CD4-positive, alpha-beta memory T cell (primary cell): ENCODE measurements at regions of chr1 and their contacts with region 1.

Region 1: GRCh38 chr1:84077476-84078107 is 66.5 kb upstream of the PRKACB start:
- DNase-seq: peak; percentile 61 to 77 (median 70)
- H3K4me3 ChIP-seq: peak overlapping the region; percentile 60 to 70
- H3K4me3 Mint-ChIP-seq: peak overlapping the region; percentile 82 to 93 (median 90)
- H3K27ac ChIP-seq: peak overlapping the region; percentile 43
- H3K27ac Mint-ChIP-seq: peak overlapping the region in 6 of 7 donors; percentile 19 to 85 (median 76)
- H3K4me1 ChIP-seq: peaks cover 17% of the 10 kb centered on the region
- H3K4me1 Mint-ChIP-seq: peaks cover 7 to 16% (median 11%) of the 10 kb centered on the region in 4 donors
- H3K27me3 ChIP-seq: no peaks in the 10 kb centered on the region
- H3K27me3 Mint-ChIP-seq: peaks cover 0 to 8% of the 10 kb centered on the region in 2 donors

Region 2: GRCh38 chr1:84090447-84091245 is 13.1 kb after region 1 on chr1:
- CTCF ChIA-PET with region 1: interaction called, 5 read pairs
- POLR2A ChIA-PET with region 1: interaction called, 11 read pairs
- intact Hi-C with region 1: loop called (anchors 2 kb)
- DNase-seq: peak; percentile 16 to 39 (median 38)
- H3K4me3 ChIP-seq: peak overlapping the region; percentile 12 to 42
- H3K4me3 Mint-ChIP-seq: peak overlapping the region; percentile 58 to 89 (median 76)
- H3K27ac ChIP-seq: no peak overlapping the region
- H3K27ac Mint-ChIP-seq: peak overlapping the region; percentile 59 to 93 (median 88)
- H3K4me1 ChIP-seq: peaks cover 21% of the 10 kb centered on the region
- H3K4me1 Mint-ChIP-seq: peaks cover 13 to 21% (median 19%) of the 10 kb centered on the region in 4 donors
- H3K27me3 ChIP-seq: no peaks in the 10 kb centered on the region
- H3K27me3 Mint-ChIP-seq: peaks cover 0 to 5% of the 10 kb centered on the region in 2 donors

Region 3: DNA sequence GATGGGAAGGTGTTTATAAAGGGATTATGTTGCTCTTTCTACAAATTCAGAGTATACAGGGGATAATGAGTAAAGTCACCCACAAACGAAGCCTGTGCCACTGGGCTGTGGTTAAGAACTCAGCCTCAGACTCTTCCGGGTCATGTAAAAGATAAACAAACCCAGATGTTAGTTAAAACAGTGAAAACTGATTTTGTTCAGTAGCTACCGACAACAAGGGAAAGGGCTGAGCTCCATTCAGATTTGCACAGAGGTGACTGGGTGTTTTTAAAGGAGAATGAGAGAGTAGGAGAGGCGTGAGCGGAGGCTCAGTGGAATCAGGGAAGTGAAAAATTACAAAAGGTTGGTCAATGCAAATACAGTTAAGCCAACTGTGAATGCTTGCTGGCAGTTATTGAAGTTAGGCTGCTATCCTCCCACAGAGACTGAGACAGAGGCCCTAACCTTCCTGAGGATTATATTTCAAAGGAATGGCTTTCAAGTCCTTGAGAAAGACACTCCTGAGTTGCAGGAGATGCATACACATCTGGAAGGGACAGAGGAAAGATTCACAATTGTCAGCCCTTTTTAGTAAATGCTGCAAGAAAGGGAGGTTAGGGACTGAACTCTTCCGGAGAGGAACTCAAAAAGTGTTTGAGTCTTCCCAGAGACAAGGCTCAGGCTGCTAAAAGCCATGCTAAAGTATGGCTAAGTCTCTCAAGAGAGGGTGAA is 194.0 kb after region 1 on chr1:
- CTCF ChIA-PET with region 1: no interaction called
- POLR2A ChIA-PET with region 1: no interaction called
- intact Hi-C with region 1: no loop called
- DNase-seq: peak in 1 of 5 donors; percentile 12
- H3K4me3 ChIP-seq: no peak overlapping the region
- H3K4me3 Mint-ChIP-seq: peak overlapping the region in 6 of 8 donors; percentile 10 to 79 (median 34)
- H3K27ac ChIP-seq: no peak overlapping the region
- H3K27ac Mint-ChIP-seq: peak overlapping the region in 3 of 7 donors; percentile 83 to 86 (median 85)
- H3K4me1 ChIP-seq: peaks cover 7% of the 10 kb centered on the region
- H3K4me1 Mint-ChIP-seq: peaks cover 5 to 11% (median 9%) of the 10 kb centered on the region in 4 donors
- H3K27me3 ChIP-seq: no peaks in the 10 kb centered on the region
- H3K27me3 Mint-ChIP-seq: peaks cover 0 to 4% of the 10 kb centered on the region in 2 donors